HAP-1 (cell line): ENCODE measurements at regions of chr12 and their contacts with region 1.

Region 1: GRCh38 chr12:115916910-115917668 is 360.4 kb downstream of the MED13L start:
- DNase-seq: peak in 1 of 2 experiments; percentile 80
- H3K4me3 ChIP-seq: no peak overlapping the region
- H3K4me1 ChIP-seq: no peaks in the 10 kb centered on the region
- H3K27me3 ChIP-seq: no peaks in the 10 kb centered on the region; the same call in 1 of the 2 replicates

Region 2: DNA sequence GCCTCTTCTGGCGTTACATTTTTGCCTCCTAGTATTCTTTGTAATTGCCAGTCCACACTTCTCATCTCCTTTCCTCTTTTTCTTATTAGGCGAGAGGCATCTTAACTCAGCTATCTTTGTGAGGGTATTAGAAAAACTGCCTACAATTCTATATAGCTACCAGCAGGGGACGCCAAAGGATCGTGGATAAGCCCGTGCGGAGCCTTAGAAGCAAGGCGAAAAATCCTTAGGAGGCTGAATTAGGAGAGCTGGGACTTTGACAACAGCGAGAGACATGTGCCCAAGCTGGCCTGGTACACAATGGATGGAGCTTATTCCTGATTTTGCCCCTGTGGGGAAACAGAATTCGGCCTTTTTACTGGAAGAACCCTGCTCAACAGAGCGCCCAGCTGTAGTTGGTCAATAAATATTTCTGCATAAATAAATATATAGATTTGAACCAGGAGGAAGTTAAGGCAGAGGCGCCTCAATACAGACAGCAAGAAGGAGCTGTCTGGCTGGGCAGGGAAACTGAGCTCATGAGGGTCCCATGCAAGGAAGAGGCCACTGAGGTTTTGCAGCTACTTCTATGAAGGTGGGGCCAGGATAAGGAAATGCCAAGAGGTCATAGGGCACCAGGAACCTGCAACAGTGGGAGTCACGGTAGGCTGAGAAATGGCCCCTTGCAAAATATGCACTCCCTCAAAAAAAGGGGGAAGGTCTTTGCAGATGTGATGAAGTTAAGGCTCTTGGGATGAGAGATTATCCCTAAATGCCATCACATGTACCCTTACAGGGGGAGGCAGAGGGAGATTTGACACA is 1936.4 kb before region 1 on chr12:
- in situ Hi-C with region 1: loop called (anchors 10 kb)
- DNase-seq: peak; percentile 70 to 80
- H3K4me3 ChIP-seq: no peak overlapping the region
- H3K4me1 ChIP-seq: no peaks in the 10 kb centered on the region
- H3K27me3 ChIP-seq: no peaks in the 10 kb centered on the region

Region 3: DNA sequence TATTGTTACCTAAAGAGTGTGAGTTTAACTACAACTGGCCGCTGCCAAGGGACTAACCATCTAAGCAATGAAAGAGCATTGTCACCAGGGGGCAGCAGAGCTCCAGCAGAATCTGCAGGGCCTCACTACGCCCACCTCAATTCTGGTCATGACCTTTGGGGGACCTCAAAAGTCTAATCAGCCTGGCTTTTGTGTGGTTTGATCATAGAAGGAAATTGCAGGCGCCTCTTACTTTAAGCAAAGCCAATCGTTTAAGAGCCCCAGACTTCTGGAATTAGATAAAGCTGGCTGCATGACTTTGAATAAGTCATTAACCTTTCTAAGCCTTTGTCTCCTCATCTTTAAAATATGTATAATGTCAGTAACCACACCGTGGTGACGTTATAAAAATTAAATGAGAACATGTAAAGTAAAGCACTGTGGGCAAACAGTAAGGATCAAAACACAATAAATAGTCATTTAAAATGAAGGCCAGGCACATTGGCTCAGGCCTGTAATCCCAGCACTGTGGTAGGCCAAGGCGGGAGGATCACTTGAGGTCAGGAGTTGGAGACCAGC is 1291.7 kb before region 1 on chr12:
- in situ Hi-C with region 1: loop called (anchors 5 kb)
- DNase-seq: peak; percentile 49 to 83
- H3K4me3 ChIP-seq: no peak overlapping the region
- H3K4me1 ChIP-seq: peaks cover 2% of the 10 kb centered on the region; the same call in 1 of the 2 replicates
- H3K27me3 ChIP-seq: no peaks in the 10 kb centered on the region

Region 4: GRCh38 chr12:114662512-114663177 is 1254.4 kb before region 1 on chr12:
- in situ Hi-C with region 1: loop called (anchors 10 kb)
- DNase-seq: peak; percentile 66 to 86
- H3K4me3 ChIP-seq: no peak overlapping the region
- H3K4me1 ChIP-seq: peaks cover 6% of the 10 kb centered on the region
- H3K27me3 ChIP-seq: no peaks in the 10 kb centered on the region